Activated CD4-positive, alpha-beta T cell treated with anti-CD3 and anti-CD28 coated beads for 36 hours (primary cell): ENCODE measurements at regions of chr16 and their contacts with region 1.

Region 1: GRCh38 chr16:75110637-75111513 is 5.7 kb downstream of the LDHD start:
- DNase-seq: peak; percentile 93
- ATAC-seq: peak; percentile 67
- H3K4me3 Mint-ChIP-seq: peak overlapping the region; percentile 84
- H3K27ac Mint-ChIP-seq: peak overlapping the region; percentile 92
- H3K4me1 Mint-ChIP-seq: peaks cover 63% of the 10 kb centered on the region
- H3K27me3 Mint-ChIP-seq: peaks cover 6% of the 10 kb centered on the region

Region 2: GRCh38 chr16:74813109-74813641 is 297.7 kb before region 1 on chr16:
- CTCF ChIA-PET with region 1: interaction called, 5 read pairs
- POLR2A ChIA-PET with region 1: no interaction called
- intact Hi-C with region 1: loop called (anchors 1 kb)
- DNase-seq: peak; percentile 89
- ATAC-seq: peak; percentile 100
- H3K4me3 Mint-ChIP-seq: no peak overlapping the region
- H3K27ac Mint-ChIP-seq: no peak overlapping the region
- H3K4me1 Mint-ChIP-seq: no peaks in the 10 kb centered on the region
- H3K27me3 Mint-ChIP-seq: no peaks in the 10 kb centered on the region

Region 3: GRCh38 chr16:74998481-74999218 is 112.2 kb before region 1 on chr16 and contains the start of gene ZNRF1:
- CTCF ChIA-PET with region 1: interaction called, 114 read pairs
- POLR2A ChIA-PET with region 1: interaction called, 7 read pairs
- intact Hi-C with region 1: loop called (anchors 1 kb)
- DNase-seq: peak; percentile 91
- ATAC-seq: peak; percentile 80
- H3K4me3 Mint-ChIP-seq: peak within 1 kb of the TSS; percentile 87
- H3K27ac Mint-ChIP-seq: peak within 1 kb of the TSS; percentile 75
- H3K4me1 Mint-ChIP-seq: peaks cover 39% of the 10 kb centered on the region
- H3K27me3 Mint-ChIP-seq: peaks cover 4% of the 10 kb centered on the region
- total RNA-seq, gene ZNRF1: 35.2 to 42.9 TPM

Region 4: GRCh38 chr16:75064403-75065148 is 46.3 kb before region 1 on chr16:
- CTCF ChIA-PET with region 1: interaction called, 12 read pairs
- POLR2A ChIA-PET with region 1: no interaction called
- intact Hi-C with region 1: loop called (anchors 1 to 5 kb)
- DNase-seq: peak; percentile 62
- ATAC-seq: peak; percentile 58
- H3K4me3 Mint-ChIP-seq: peak overlapping the region; percentile 56
- H3K27ac Mint-ChIP-seq: peak overlapping the region; percentile 74
- H3K4me1 Mint-ChIP-seq: peaks cover 41% of the 10 kb centered on the region
- H3K27me3 Mint-ChIP-seq: no peaks in the 10 kb centered on the region

Region 5: GRCh38 chr16:75099756-75100602 is 10.9 kb before region 1 on chr16:
- CTCF ChIA-PET with region 1: interaction called, 54 read pairs
- POLR2A ChIA-PET with region 1: interaction called, 23 read pairs
- intact Hi-C with region 1: loop called (anchors 1 kb)
- DNase-seq: peak; percentile 68
- ATAC-seq: peak; percentile 45
- H3K4me3 Mint-ChIP-seq: peak overlapping the region; percentile 26
- H3K27ac Mint-ChIP-seq: peak overlapping the region; percentile 88
- H3K4me1 Mint-ChIP-seq: peaks cover 64% of the 10 kb centered on the region
- H3K27me3 Mint-ChIP-seq: no peaks in the 10 kb centered on the region

Region 6: DNA sequence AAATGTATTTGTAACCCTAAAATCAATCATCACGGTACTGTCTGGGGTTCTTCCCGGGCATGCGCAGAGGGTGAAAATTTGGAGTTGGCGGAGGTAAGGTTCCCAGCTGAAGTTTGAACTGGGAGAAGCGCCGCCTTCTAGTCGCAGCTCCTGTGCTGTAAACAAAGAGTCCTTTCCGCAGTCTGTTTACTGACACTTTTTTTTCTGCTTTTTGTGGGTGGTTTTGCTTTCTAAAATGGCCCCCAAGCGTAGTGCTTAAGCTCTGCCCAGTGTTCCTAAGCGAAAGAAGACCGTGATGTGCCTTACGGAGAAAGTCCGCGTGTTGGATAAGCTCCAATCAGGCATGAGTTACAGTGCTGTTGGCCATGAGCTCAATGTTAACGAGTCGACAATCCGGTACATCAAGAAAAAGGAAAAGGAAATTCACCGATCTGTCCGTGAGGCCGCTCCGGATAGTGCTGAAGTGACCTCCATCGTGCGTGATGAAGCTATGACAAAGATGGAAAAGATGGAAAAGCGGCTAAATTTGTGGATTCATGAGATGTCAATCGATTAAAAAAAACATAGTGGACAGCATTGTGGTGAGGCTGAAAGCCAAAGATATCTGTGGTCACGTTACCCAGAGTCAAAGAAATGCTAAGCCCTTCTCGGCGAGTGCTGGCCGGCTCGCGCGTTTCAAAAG is 323.0 kb after region 1 on chr16:
- CTCF ChIA-PET with region 1: no interaction called
- POLR2A ChIA-PET with region 1: no interaction called
- intact Hi-C with region 1: no loop called
- DNase-seq: peak; percentile 14
- ATAC-seq: peak; percentile 78
- H3K4me3 Mint-ChIP-seq: peak overlapping the region; percentile 92
- H3K27ac Mint-ChIP-seq: peak overlapping the region; percentile 95
- H3K4me1 Mint-ChIP-seq: peaks cover 37% of the 10 kb centered on the region
- H3K27me3 Mint-ChIP-seq: no peaks in the 10 kb centered on the region

Region 7: GRCh38 chr16:75606507-75606906 is 495.6 kb after region 1 on chr16:
- CTCF ChIA-PET with region 1: no interaction called
- POLR2A ChIA-PET with region 1: no interaction called
- intact Hi-C with region 1: no loop called
- DNase-seq: no peak
- ATAC-seq: no peak
- H3K4me3 Mint-ChIP-seq: no peak overlapping the region
- H3K27ac Mint-ChIP-seq: no peak overlapping the region
- H3K4me1 Mint-ChIP-seq: peaks cover 6% of the 10 kb centered on the region
- H3K27me3 Mint-ChIP-seq: no peaks in the 10 kb centered on the region